ENCODE measurements at regions of chr22 and their contacts with region 1.

Region 1: GRCh38 chr22:28442264-28442710 is 237.4 kb downstream of the TTC28 start:
- DNase-seq: peak; percentile 85
- H3K4me3 ChIP-seq: peak overlapping the region; percentile 35 to 65 (median 56)
- H3K27ac ChIP-seq: peak overlapping the region; percentile 74 to 85 (median 77)
- H3K4me1 ChIP-seq: peaks cover 0 to 37% (median 22%) of the 10 kb centered on the region in 4 donors
- H3K27me3 ChIP-seq: no peaks in the 10 kb centered on the region
- CTCF ChIP-seq: peak; percentile 33 to 65 (median 62)
- EP300 ChIP-seq: no peak
- POLR2A ChIP-seq: no peak

Region 2: GRCh38 chr22:28019881-28020871 is 422.1 kb before region 1 on chr22:
- intact Hi-C with region 1: loop called (anchors 5 kb)
- DNase-seq: peak; percentile 90
- H3K4me3 ChIP-seq: peak overlapping the region in 2 of 4 donors; percentile 4 to 8
- H3K27ac ChIP-seq: peak overlapping the region in 2 of 4 donors; percentile 40 to 59
- H3K4me1 ChIP-seq: peaks cover 0 to 17% (median 13%) of the 10 kb centered on the region in 4 donors
- H3K27me3 ChIP-seq: no peaks in the 10 kb centered on the region
- CTCF ChIP-seq: peak; percentile 87 to 98 (median 94)
- EP300 ChIP-seq: no peak
- POLR2A ChIP-seq: no peak

Region 3: DNA sequence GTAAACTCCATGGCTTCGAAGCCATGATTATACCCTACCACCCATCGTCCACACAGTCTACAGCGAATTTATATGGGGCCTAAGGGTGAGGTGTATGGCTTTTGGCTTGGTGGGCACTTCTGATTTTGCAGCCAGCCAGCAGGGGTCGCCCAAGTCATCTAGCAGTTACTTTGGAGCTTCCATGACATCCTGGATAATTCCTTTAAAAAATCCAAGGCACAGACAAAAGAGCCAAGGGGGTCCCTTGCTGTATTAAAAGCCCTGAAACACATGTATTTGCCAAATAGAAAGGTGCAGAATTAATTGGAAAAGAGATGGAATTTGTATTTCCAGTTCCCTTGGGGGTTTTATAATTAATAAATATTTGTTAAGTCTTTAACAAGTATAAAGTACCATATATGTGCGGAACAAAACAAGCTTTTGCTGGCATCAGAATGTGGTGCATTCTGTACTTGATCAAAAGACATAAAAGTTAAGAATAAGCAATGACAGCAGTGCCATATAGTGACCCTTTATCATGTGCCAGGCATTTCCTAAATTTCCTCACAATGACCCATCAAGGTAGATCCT is 390.4 kb before region 1 on chr22:
- intact Hi-C with region 1: loop called (anchors 10 kb)
- DNase-seq: peak; percentile 84
- H3K4me3 ChIP-seq: no peak overlapping the region
- H3K27ac ChIP-seq: no peak overlapping the region
- H3K4me1 ChIP-seq: no peaks in the 10 kb centered on the region
- H3K27me3 ChIP-seq: no peaks in the 10 kb centered on the region
- CTCF ChIP-seq: peak; percentile 51 to 91 (median 80)
- EP300 ChIP-seq: no peak
- POLR2A ChIP-seq: no peak

Region 4: GRCh38 chr22:28310299-28310698 is 132.0 kb before region 1 on chr22:
- intact Hi-C with region 1: no loop called
- DNase-seq: no peak
- H3K4me3 ChIP-seq: no peak overlapping the region
- H3K27ac ChIP-seq: no peak overlapping the region
- H3K4me1 ChIP-seq: no peaks in the 10 kb centered on the region
- H3K27me3 ChIP-seq: no peaks in the 10 kb centered on the region
- CTCF ChIP-seq: no peak
- EP300 ChIP-seq: no peak
- POLR2A ChIP-seq: no peak

Measured in sigmoid colon (tissue), 7 donors.